GM12878 (cell line): ENCODE measurements at regions of chr10 and their contacts with region 1.

Region 1: DNA sequence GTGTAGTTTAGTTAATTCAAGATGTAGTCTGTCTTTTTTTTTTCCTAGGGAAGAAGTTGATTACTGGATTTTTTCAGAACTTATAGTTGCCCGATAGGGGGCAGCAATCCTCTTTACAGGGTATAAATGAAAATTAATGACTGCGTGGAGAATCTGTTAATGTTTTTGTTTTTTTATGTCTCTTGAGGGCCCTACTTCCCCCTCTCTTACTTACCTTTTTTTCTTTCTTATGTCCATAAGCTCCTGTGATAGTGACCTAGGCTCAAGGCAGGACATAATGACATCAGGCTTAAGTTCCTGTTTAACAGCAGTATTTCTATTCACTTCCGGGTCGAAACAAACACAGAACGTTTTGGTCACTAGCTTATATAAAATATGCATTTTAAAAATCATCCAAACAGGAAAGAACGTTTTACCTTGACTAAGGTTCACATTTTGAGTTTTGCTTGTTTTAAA is 18.8 kb downstream of the CDC123 start:
- DNase-seq: no peak
- ATAC-seq: peak; percentile 54; the same call in 2 of the 3 replicates
- H3K4me3 ChIP-seq: no peak overlapping the region
- H3K27ac ChIP-seq: no peak overlapping the region
- H3K4me1 ChIP-seq: no peaks in the 10 kb centered on the region
- H3K27me3 ChIP-seq: no peaks in the 10 kb centered on the region
- CTCF ChIP-seq: peak; percentile 54 to 65 (median 59)
- EP300 ChIP-seq: no peak
- POLR2A ChIP-seq: no peak
- RAD21 ChIP-seq: peak; percentile 68

Region 2: GRCh38 chr10:12042797-12043651 is 171.8 kb before region 1 on chr10 and contains the start of gene UPF2:
- CTCF ChIA-PET with region 1: no interaction called
- POLR2A ChIA-PET with region 1: no interaction called
- RAD21 ChIA-PET with region 1: no interaction called
- SMC1A ChIA-PET with region 1: no interaction called
- in situ Hi-C with region 1: no loop called
- intact Hi-C with region 1: no loop called
- DNase-seq: peak; percentile 96
- ATAC-seq: peak; percentile 66
- H3K4me3 ChIP-seq: peak within 1 kb of the TSS; percentile 88
- H3K27ac ChIP-seq: peak within 1 kb of the TSS; percentile 97
- H3K4me1 ChIP-seq: peaks cover 15% of the 10 kb centered on the region
- H3K27me3 ChIP-seq: no peaks in the 10 kb centered on the region
- CTCF ChIP-seq: no peak
- EP300 ChIP-seq: no peak; a peak in 1 of 4 replicates
- POLR2A ChIP-seq: no peak; the same call in 1 of the 2 replicates
- RAD21 ChIP-seq: no peak
- polyA plus RNA-seq, gene UPF2: 21.2 to 22.2 TPM

Region 3: GRCh38 chr10:12195603-12196506 is 18.9 kb before region 1 on chr10 and contains the starts of genes CDC123 and NUDT5:
- CTCF ChIA-PET with region 1: interaction called, 53 read pairs
- POLR2A ChIA-PET with region 1: interaction called, 3 read pairs
- RAD21 ChIA-PET with region 1: interaction called, 3 read pairs
- SMC1A ChIA-PET with region 1: interaction called, 14 read pairs
- in situ Hi-C with region 1: no loop called
- intact Hi-C with region 1: no loop called
- DNase-seq: peak; percentile 81
- ATAC-seq: peak; percentile 94
- H3K4me3 ChIP-seq: peak within 1 kb of the TSS; percentile 84
- H3K27ac ChIP-seq: peak within 1 kb of the TSS; percentile 98
- H3K4me1 ChIP-seq: peaks cover 4% of the 10 kb centered on the region; the same call in 1 of the 2 replicates
- H3K27me3 ChIP-seq: no peaks in the 10 kb centered on the region
- CTCF ChIP-seq: peak in 1 of 3 experiments; percentile 9; a peak in 1 of 6 replicates
- EP300 ChIP-seq: 0 out of 4 replicates have a peak, but pooled peaks of 1 of the 2 experiments have one; percentile 28
- POLR2A ChIP-seq: peak; percentile 95
- RAD21 ChIP-seq: no peak
- polyA plus RNA-seq, gene CDC123: 162 to 226 TPM
- polyA plus RNA-seq, gene NUDT5: 293 to 345 TPM

Region 4: DNA sequence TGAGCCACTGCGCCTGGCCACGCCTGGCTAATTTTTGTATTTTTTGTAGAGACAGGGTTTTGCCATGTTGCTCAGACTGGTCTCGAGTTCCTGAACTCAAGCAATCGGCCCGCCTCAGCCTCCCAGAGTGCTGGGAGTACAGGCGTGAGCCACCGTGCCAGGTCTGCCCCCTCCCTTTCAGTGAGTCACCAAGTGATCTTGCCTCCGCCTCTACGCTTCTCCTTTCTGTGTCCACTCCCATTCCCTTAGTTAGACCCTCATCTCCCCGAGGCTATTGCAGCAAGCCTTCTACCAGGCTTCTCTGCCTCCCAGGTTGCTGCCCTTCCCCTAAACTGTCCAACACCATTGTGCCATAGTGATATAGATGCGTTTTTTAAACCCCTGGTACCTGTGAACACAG is 14.1 kb after region 1 on chr10:
- CTCF ChIA-PET with region 1: interaction called, 34 read pairs
- POLR2A ChIA-PET with region 1: no interaction called
- RAD21 ChIA-PET with region 1: no interaction called
- SMC1A ChIA-PET with region 1: interaction called, 7 read pairs
- in situ Hi-C with region 1: no loop called
- intact Hi-C with region 1: no loop called
- DNase-seq: no peak
- ATAC-seq: no peak
- H3K4me3 ChIP-seq: no peak overlapping the region
- H3K27ac ChIP-seq: no peak overlapping the region
- H3K4me1 ChIP-seq: no peaks in the 10 kb centered on the region
- H3K27me3 ChIP-seq: no peaks in the 10 kb centered on the region
- CTCF ChIP-seq: no peak
- EP300 ChIP-seq: no peak
- POLR2A ChIP-seq: no peak
- RAD21 ChIP-seq: no peak

Region 5: DNA sequence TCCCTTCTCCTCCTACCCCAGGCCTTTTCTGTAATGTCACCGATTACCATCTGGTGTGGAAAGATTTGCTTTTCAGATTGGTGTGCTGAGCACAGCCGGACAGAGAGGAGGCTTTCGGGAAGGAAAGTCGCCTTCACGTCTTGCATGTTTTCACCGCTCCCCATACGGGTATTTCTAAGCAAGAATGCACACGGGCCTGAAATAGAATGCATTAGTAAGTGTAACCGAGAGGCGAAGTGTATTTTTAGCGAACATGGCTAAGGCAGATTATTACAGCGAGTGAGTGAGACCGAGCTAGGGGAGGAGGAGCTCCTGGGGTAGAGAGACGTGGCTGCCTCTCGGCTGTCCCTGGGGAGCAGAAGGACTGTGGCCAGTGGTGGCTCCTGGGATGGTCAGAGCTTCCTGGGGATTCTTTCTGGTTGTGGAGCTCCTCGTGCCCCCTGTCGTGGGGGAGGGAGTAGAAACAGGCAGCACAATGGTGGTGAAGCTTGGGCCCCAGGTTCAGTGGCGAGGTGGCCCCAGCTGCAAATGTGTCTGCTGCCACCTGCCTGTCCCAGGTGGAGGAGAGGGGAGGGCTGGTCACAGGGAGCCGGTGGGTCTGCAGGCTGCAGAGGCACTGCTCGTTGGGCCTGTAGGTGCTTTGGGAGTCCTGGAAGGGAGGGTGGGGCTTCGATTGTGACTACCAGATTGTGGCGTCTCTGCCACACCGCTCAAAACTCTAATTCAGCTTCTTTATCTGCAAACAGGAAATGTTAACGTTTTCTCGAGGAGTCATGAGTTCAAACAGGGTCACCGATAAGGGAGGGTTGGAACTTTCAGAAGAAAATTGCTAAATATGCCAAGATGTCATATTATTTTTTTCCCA is 270.4 kb after region 1 on chr10:
- CTCF ChIA-PET with region 1: interaction called, 28 read pairs
- POLR2A ChIA-PET with region 1: no interaction called
- RAD21 ChIA-PET with region 1: interaction called, 7 read pairs
- SMC1A ChIA-PET with region 1: interaction called, 13 read pairs
- in situ Hi-C with region 1: no loop called
- intact Hi-C with region 1: no loop called
- DNase-seq: peak; percentile 76
- ATAC-seq: peak; percentile 85
- H3K4me3 ChIP-seq: no peak overlapping the region
- H3K27ac ChIP-seq: peak overlapping the region; percentile 76
- H3K4me1 ChIP-seq: peaks cover 20% of the 10 kb centered on the region
- H3K27me3 ChIP-seq: no peaks in the 10 kb centered on the region
- CTCF ChIP-seq: peak in 2 of 3 experiments; percentile 37 to 56; a peak in 3 of 6 replicates
- EP300 ChIP-seq: no peak
- POLR2A ChIP-seq: peak; percentile 37
- RAD21 ChIP-seq: peak; percentile 31; the same call in 1 of the 2 replicates

Region 6: GRCh38 chr10:12661671-12662070 is 446.9 kb after region 1 on chr10:
- CTCF ChIA-PET with region 1: interaction called, 88 read pairs
- POLR2A ChIA-PET with region 1: interaction called, 3 read pairs
- RAD21 ChIA-PET with region 1: interaction called, 38 read pairs
- SMC1A ChIA-PET with region 1: interaction called, 56 read pairs
- in situ Hi-C with region 1: no loop called
- intact Hi-C with region 1: loop called (anchors 2 kb)
- DNase-seq: no peak
- ATAC-seq: no peak
- H3K4me3 ChIP-seq: no peak overlapping the region
- H3K27ac ChIP-seq: no peak overlapping the region
- H3K4me1 ChIP-seq: no peaks in the 10 kb centered on the region
- H3K27me3 ChIP-seq: no peaks in the 10 kb centered on the region
- CTCF ChIP-seq: no peak
- EP300 ChIP-seq: no peak
- POLR2A ChIP-seq: no peak
- RAD21 ChIP-seq: no peak

Region 7: DNA sequence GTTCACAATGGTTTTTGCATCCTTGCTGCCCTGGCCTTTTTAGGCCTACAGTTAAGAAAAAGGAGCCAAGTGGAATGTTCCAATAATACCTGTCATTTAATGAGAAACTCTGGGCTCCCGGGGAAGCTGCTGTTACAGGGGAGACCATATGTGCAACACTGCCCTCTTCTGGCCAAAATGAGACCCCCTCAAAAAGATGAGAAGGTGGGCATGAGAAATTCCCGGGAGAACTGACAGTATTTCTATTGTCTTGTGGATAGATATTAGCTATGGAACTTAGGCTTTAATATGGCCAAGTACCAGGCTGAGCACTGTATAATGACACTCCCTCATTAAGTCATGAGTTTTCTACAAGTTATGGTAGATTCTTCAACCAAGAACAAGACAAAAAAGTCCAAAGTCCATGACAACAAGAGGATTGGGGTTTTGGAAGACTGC is 687.4 kb after region 1 on chr10:
- CTCF ChIA-PET with region 1: interaction called, 23 read pairs
- POLR2A ChIA-PET with region 1: no interaction called
- RAD21 ChIA-PET with region 1: interaction called, 12 read pairs
- SMC1A ChIA-PET with region 1: interaction called, 15 read pairs
- in situ Hi-C with region 1: loop called (anchors 10 kb)
- intact Hi-C with region 1: no loop called
- DNase-seq: peak; percentile 4
- ATAC-seq: peak; percentile 76
- H3K4me3 ChIP-seq: no peak overlapping the region
- H3K27ac ChIP-seq: no peak overlapping the region
- H3K4me1 ChIP-seq: no peaks in the 10 kb centered on the region
- H3K27me3 ChIP-seq: 0 out of 4 replicates have a peak, but pooled peaks cover 0 to 1% of the 10 kb centered on the region in 2 experiments
- CTCF ChIP-seq: peak; percentile 68 to 76 (median 72)
- EP300 ChIP-seq: no peak
- POLR2A ChIP-seq: no peak
- RAD21 ChIP-seq: peak; percentile 83